CD8-positive, alpha-beta memory T cell (primary cell): ENCODE measurements at regions of chr13 and their contacts with region 1.

Region 1: DNA sequence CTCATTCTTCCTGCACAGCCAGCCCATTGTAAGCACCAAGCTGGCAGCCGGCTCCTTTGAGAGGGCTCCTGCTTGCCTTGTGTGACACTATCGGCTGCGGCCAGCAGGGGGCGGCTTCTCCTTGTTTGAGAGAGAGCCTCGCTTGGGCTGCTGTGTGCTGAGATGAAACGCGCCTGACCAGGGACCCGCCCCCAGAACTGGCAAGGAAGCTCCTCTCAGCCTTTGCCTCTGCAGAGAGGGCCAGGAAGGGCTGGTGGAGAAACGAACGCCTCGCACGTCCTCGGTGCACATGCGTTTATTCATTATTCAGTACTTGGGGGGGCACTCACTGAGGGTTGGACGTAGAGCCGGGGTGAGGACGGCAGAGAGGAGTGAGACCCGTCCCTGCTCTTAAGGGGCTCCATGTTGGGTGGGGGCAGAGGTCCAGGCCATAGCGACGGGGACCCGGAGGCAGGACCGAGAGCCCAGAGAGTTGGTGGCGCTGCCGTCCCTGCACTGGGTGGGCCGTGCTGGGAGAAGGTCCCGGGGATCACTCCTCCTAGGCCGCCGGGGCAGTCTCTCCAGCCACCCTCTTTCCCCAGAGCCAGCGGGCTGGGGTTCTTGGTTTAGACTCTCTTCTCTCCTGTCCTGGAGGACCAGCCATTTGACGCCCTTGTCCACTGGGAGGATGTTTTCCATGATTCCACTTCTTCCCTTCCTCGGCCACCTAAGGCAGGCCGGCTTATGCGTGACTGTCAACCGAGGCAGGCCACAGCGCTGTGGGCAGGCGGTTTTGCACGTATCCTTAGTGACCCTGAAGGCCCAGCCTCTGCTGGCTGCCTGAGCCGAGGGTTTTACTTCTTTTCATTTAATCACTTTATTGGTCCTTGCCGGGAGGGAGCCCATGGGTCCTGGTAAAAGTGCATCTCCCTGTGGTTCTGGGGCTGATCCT is 174.5 kb downstream of the KATNAL1 start:
- DNase-seq: peak; percentile 87 to 97 (median 93)
- H3K4me3 ChIP-seq: peak overlapping the region; percentile 11
- H3K4me3 Mint-ChIP-seq: peak overlapping the region in 6 of 7 donors; percentile 29 to 76 (median 60)
- H3K27ac ChIP-seq: no peak overlapping the region
- H3K27ac Mint-ChIP-seq: peak overlapping the region in 6 of 8 donors; percentile 10 to 96 (median 68)
- H3K4me1 ChIP-seq: peaks cover 15% of the 10 kb centered on the region
- H3K4me1 Mint-ChIP-seq: peaks cover 23 to 30% (median 30%) of the 10 kb centered on the region in 3 donors
- H3K27me3 ChIP-seq: no peaks in the 10 kb centered on the region
- H3K27me3 Mint-ChIP-seq: peaks cover 0 to 2% of the 10 kb centered on the region in 2 donors

Region 2: DNA sequence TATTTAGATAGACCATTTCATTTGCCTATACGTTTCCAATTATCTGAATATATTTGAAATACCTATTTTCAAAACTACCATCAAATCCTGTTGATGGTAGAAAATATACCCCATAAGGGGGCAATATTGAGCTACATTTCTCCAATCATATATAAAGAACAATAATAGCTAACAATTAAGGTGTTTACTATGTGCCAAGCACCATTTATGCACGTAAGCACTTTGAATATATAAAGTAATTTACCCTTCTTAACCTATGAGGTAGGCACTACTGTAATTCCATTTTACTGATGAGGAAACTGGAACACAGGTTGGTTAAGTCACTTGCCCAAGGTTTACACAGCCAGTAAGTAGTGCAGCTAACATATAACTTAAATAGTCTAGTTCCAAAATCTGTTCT is 361.6 kb before region 1 on chr13:
- CTCF ChIA-PET with region 1: interaction called, 10 read pairs
- POLR2A ChIA-PET with region 1: no interaction called
- DNase-seq: peak in 2 of 5 donors; percentile 39 to 51
- H3K4me3 ChIP-seq: no peak overlapping the region
- H3K4me3 Mint-ChIP-seq: no peak overlapping the region
- H3K27ac ChIP-seq: no peak overlapping the region
- H3K27ac Mint-ChIP-seq: no peak overlapping the region
- H3K4me1 ChIP-seq: no peaks in the 10 kb centered on the region
- H3K4me1 Mint-ChIP-seq: peaks cover 9 to 12% (median 9%) of the 10 kb centered on the region in 3 donors
- H3K27me3 ChIP-seq: no peaks in the 10 kb centered on the region
- H3K27me3 Mint-ChIP-seq: no peaks in the 10 kb centered on the region

Region 3: DNA sequence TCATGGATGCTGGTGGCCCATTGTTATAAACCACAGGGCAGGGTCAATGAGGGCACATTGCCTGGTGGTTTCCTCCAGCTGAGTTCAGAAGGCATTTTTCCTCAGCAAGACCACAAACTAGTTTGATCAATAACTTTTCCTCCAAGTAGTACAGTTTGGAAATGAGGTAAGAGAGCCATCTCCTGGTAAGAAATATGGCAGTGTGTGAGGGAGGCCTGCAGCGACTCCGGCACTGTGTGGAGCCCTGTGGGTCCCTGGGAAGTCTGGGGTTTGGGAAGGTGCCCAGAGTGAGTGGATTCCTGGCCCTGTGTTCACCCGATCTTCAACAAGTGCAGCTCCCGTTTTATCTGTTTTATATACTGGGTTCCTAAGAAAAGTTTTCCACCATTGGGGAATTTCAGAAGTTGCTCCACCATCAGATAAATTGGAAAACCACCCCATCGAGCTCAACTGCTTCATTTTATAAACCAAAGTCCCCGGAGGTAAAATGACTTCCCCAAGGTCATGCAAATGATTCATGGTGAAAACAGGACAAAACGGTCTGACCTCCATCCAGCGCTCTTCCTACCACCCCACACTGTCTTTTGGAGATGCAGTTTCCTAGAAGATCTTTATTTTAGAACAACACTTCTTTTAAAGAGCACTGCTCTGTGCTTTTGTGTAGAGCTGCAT is 26.0 kb after region 1 on chr13:
- CTCF ChIA-PET with region 1: interaction called, 289 read pairs
- POLR2A ChIA-PET with region 1: interaction called, 24 read pairs
- DNase-seq: peak in 2 of 5 donors; percentile 48 to 57
- H3K4me3 ChIP-seq: no peak overlapping the region
- H3K4me3 Mint-ChIP-seq: peak overlapping the region in 6 of 7 donors; percentile 15 to 72 (median 58)
- H3K27ac ChIP-seq: no peak overlapping the region
- H3K27ac Mint-ChIP-seq: peak overlapping the region; percentile 43 to 92 (median 80)
- H3K4me1 ChIP-seq: peaks cover 24% of the 10 kb centered on the region
- H3K4me1 Mint-ChIP-seq: peaks cover 51 to 58% (median 57%) of the 10 kb centered on the region in 3 donors
- H3K27me3 ChIP-seq: no peaks in the 10 kb centered on the region
- H3K27me3 Mint-ChIP-seq: no peaks in the 10 kb centered on the region

Region 4: GRCh38 chr13:30175166-30175565 is 42.3 kb after region 1 on chr13:
- CTCF ChIA-PET with region 1: interaction called, 13 read pairs
- POLR2A ChIA-PET with region 1: no interaction called
- DNase-seq: no peak
- H3K4me3 ChIP-seq: no peak overlapping the region
- H3K4me3 Mint-ChIP-seq: no peak overlapping the region
- H3K27ac ChIP-seq: no peak overlapping the region
- H3K27ac Mint-ChIP-seq: no peak overlapping the region
- H3K4me1 ChIP-seq: no peaks in the 10 kb centered on the region
- H3K4me1 Mint-ChIP-seq: peaks cover 6 to 8% (median 7%) of the 10 kb centered on the region in 3 donors
- H3K27me3 ChIP-seq: no peaks in the 10 kb centered on the region
- H3K27me3 Mint-ChIP-seq: peaks cover 0 to 2% of the 10 kb centered on the region in 2 donors

Region 5: DNA sequence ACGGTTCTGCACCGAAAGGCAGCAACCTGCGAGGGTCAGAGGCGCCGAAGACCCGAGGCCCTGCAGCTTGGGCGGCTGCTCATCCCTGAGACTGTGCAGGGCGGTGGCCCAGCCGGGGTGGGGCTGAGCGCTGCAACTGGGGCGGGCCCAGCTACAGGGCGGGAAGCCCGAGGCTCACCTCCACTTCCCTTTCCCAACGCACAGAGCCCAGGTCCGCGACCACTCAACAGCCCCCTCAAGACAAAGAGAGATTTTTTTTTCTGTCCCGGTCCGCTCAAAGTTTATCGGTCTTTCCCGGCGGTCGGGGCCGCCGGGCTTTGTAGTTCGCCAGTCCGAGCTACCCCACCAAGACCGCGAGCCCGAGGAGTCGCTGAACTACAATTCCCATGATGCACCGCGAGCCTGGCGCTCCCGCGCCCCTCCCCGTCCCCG is 173.9 kb after region 1 on chr13:
- CTCF ChIA-PET with region 1: interaction called, 14 read pairs
- POLR2A ChIA-PET with region 1: no interaction called
- DNase-seq: peak; percentile 85 to 91 (median 87)
- H3K4me3 ChIP-seq: peak overlapping the region; percentile 77
- H3K4me3 Mint-ChIP-seq: peak overlapping the region in 6 of 7 donors; percentile 89 to 95 (median 92)
- H3K27ac ChIP-seq: peak overlapping the region; percentile 75
- H3K27ac Mint-ChIP-seq: peak overlapping the region; percentile 68 to 92 (median 84)
- H3K4me1 ChIP-seq: peaks cover 10% of the 10 kb centered on the region
- H3K4me1 Mint-ChIP-seq: peaks cover 37 to 52% (median 46%) of the 10 kb centered on the region in 3 donors
- H3K27me3 ChIP-seq: no peaks in the 10 kb centered on the region
- H3K27me3 Mint-ChIP-seq: peaks cover 0 to 1% of the 10 kb centered on the region in 2 donors

Region 6: DNA sequence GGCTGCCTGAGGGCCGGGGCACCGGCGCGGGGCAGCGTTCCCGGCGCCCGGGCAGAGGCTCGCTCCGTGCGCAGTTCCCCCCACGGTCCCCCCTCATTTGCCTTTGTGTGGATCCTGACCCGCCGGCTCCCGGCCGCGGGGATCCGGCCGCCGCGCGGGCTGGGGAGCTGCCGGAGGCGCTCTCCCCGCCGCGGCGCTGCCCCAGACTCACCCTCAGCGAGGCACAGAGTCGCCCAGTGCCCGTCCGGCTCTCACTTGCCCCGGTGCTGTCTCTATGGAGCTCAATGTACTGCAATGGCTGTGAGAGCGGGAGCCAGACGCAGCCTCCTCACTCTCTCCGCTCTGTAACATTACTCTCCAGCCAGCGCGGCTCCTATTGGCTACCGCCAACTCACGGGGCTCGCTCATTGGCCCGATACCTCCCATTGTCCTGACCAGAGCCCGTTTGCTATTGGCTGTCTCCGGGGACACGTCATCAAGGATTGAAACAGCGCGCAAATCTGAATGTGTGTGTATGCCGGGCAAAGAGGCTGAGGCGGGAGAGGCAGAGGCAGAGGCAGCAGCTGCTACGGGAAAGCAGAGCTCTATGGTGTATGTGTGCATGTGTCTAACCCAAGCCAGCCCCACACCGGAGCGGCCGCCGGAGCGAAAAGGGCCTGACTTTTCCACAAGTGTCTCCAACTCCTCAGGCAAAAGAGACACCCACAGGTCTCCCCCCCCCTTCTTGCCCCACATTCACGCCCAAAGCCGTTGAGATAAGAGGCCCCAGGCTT is 332.9 kb after region 1 on chr13 and contains the start of gene HMGB1:
- CTCF ChIA-PET with region 1: interaction called, 33 read pairs
- POLR2A ChIA-PET with region 1: interaction called, 3 read pairs
- DNase-seq: peak; percentile 93 to 99 (median 96)
- H3K4me3 ChIP-seq: peak within 1 kb of the TSS; percentile 77
- H3K4me3 Mint-ChIP-seq: peak within 1 kb of the TSS; percentile 91 to 99 (median 97)
- H3K27ac ChIP-seq: peak within 1 kb of the TSS; percentile 91
- H3K27ac Mint-ChIP-seq: peak within 1 kb of the TSS; percentile 98 to 99 (median 98)
- H3K4me1 ChIP-seq: peaks cover 27% of the 10 kb centered on the region
- H3K4me1 Mint-ChIP-seq: peaks cover 36 to 44% (median 40%) of the 10 kb centered on the region in 3 donors
- H3K27me3 ChIP-seq: no peaks in the 10 kb centered on the region
- H3K27me3 Mint-ChIP-seq: peaks cover 0 to 10% of the 10 kb centered on the region in 2 donors
- total RNA-seq, gene HMGB1: 694 to 729 TPM